ENCODE measurements at regions of chr6 and their contacts with region 1.

Region 1: GRCh38 chr6:41442800-41443501 is 103.2 kb upstream of the FOXP4 start:
- DNase-seq: peak; percentile 86
- ATAC-seq: peak; percentile 83
- H3K4me3 Mint-ChIP-seq: peak overlapping the region; percentile 60
- H3K27ac Mint-ChIP-seq: 0 out of 2 replicates have a peak overlapping the region, but pooled peaks have one; percentile 66
- H3K4me1 Mint-ChIP-seq: peaks cover 49% of the 10 kb centered on the region
- H3K27me3 Mint-ChIP-seq: peaks cover 54% of the 10 kb centered on the region
- CTCF ChIP-seq: peak; percentile 96

Region 2: GRCh38 chr6:41367700-41368099 is 75.3 kb before region 1 on chr6:
- CTCF ChIA-PET with region 1: interaction called, 21 read pairs
- POLR2A ChIA-PET with region 1: no interaction called
- DNase-seq: peak; percentile 84
- ATAC-seq: peak; percentile 77
- H3K4me3 Mint-ChIP-seq: no peak overlapping the region
- H3K27ac Mint-ChIP-seq: no peak overlapping the region
- H3K4me1 Mint-ChIP-seq: peaks cover 30% of the 10 kb centered on the region
- H3K27me3 Mint-ChIP-seq: peaks cover 75% of the 10 kb centered on the region
- CTCF ChIP-seq: peak; percentile 58

Region 3: GRCh38 chr6:41424370-41425058 is 18.4 kb before region 1 on chr6:
- CTCF ChIA-PET with region 1: interaction called, 108 read pairs
- POLR2A ChIA-PET with region 1: no interaction called
- DNase-seq: peak; percentile 91
- ATAC-seq: peak; percentile 33
- H3K4me3 Mint-ChIP-seq: no peak overlapping the region
- H3K27ac Mint-ChIP-seq: no peak overlapping the region
- H3K4me1 Mint-ChIP-seq: peaks cover 9% of the 10 kb centered on the region
- H3K27me3 Mint-ChIP-seq: peaks cover 50% of the 10 kb centered on the region
- CTCF ChIP-seq: peak; percentile 80

Region 4: DNA sequence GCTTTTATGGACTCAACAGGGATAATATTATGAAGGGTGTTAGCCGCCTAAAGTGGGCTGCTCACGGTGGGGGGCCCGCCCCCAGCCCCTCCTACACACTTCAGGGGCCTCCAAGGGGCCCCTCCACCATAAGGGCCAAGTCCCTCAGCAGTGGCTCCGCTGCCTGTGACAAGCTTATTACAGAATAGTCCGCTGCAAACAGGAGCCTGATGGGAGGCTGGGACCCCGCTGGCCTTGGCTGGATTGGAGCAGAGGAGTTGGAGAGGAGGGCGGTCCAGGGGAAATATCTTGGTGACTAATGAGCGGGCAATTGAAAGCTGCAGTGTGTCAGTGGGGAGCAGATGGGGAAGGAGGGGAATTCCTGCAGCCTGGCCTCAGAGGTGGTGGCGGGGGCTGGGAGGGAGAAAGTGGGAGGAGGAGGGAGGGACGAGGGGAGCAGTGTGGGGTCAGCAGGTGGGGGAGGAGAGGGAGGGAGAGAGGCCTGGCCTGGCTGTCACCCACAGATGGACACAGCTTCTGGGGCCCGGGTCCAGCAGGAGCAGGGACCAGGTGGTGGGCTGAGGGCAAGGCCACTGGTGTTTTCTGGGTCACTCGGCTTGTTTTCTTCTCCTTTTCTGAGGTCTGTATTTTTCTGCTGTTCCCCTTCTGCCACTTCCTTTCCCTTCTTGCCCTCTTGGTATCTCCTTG is 45.6 kb after region 1 on chr6:
- CTCF ChIA-PET with region 1: interaction called, 10 read pairs
- POLR2A ChIA-PET with region 1: no interaction called
- DNase-seq: peak; percentile 57
- ATAC-seq: peak; percentile 73
- H3K4me3 Mint-ChIP-seq: no peak overlapping the region; the same call in 1 of the 2 replicates
- H3K27ac Mint-ChIP-seq: no peak overlapping the region
- H3K4me1 Mint-ChIP-seq: peaks cover 53% of the 10 kb centered on the region
- H3K27me3 Mint-ChIP-seq: peaks cover 47% of the 10 kb centered on the region
- CTCF ChIP-seq: no peak

Region 5: DNA sequence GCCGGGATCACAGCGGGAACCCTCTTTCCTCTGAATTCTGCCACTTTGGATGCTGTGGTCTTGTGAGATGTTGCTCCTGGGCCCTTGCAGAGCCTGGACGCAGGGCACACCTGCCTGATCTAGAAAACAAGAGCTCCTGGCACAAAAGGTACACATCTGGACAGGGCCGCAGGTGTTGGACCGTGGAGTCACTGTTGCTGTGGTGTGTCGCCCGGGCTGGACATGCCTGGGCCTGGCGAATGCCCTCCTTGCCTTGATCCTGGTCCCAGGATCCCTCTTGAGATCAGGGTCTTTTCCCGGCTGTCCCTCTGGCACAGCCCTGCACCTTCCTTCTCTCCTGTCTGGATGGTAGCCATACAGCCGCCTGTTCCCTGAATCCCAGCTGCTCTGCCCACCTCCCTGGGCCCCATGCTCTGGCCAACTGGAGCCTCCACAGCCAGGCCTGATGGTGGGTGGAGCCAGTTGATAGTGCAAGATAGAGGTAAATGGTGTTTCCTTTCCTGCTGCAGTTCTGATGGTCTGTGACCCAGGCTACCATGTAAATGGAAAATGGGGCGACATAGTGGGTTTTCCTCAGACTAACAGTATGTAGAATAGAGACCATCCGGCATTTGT is 108.2 kb after region 1 on chr6:
- CTCF ChIA-PET with region 1: interaction called, 26 read pairs
- POLR2A ChIA-PET with region 1: no interaction called
- DNase-seq: no peak
- ATAC-seq: no peak
- H3K4me3 Mint-ChIP-seq: no peak overlapping the region
- H3K27ac Mint-ChIP-seq: no peak overlapping the region
- H3K4me1 Mint-ChIP-seq: peaks cover 77% of the 10 kb centered on the region
- H3K27me3 Mint-ChIP-seq: peaks cover 91% of the 10 kb centered on the region
- CTCF ChIP-seq: no peak

Region 6: DNA sequence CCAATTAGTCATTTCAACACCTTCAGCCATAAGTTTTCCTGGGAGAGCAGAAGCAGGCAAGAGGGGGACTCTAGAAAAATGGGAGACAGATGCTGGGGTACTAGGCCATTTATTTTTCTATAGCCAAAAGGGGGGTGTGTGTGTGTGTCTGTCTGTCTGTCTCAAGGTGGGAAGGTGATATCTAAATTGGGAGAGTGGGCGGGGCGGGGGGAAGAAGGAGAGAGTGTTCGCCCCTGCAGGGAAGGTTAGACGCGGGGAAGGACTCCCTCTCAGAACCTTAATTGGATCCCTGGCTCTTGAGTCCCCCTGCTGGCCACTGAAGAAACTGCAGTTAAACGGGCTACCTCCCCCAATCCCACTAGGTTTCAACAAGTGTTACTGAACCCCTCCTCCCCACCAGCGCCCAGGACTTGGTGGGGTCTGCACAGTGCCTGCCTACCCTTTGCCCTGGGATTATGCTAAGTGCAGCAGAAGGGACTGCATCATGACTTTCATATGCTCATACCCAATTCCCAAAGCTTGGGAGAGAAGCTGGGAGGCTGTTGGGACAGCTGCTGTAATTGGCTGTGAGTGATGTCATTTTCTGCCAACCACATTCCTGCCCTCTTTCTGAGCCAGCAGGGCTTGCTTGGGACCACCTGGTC is 149.0 kb after region 1 on chr6:
- CTCF ChIA-PET with region 1: interaction called, 12 read pairs
- POLR2A ChIA-PET with region 1: interaction called, 3 read pairs
- DNase-seq: peak; percentile 90
- ATAC-seq: peak; percentile 78
- H3K4me3 Mint-ChIP-seq: no peak overlapping the region
- H3K27ac Mint-ChIP-seq: no peak overlapping the region
- H3K4me1 Mint-ChIP-seq: peaks cover 41% of the 10 kb centered on the region
- H3K27me3 Mint-ChIP-seq: peaks cover 7% of the 10 kb centered on the region; the same call in 1 of the 2 replicates
- CTCF ChIP-seq: peak; percentile 98